ENCODE measurements at regions of chr17 and their contacts with region 1.

Region 1: GRCh38 chr17:1724506-1725362 is at the start of gene WDR81:
- DNase-seq: peak; percentile 82 to 94 (median 89)
- ATAC-seq: peak; percentile 83 to 92 (median 84)
- H3K4me3 ChIP-seq: peak within 1 kb of the TSS; percentile 86 to 95 (median 89)
- H3K27ac ChIP-seq: peak within 1 kb of the TSS; percentile 40 to 75 (median 54)
- H3K4me1 ChIP-seq: peaks cover 0 to 26% (median 0%) of the 10 kb centered on the region in 3 donors
- H3K27me3 ChIP-seq: no peaks in the 10 kb centered on the region
- CTCF ChIP-seq: no peak
- total RNA-seq, gene WDR81: 5.7 to 17.0 (median 8.3) TPM

Region 2: GRCh38 chr17:1546292-1546922 is 178.3 kb before region 1 on chr17:
- intact Hi-C with region 1: no loop called
- DNase-seq: no peak
- ATAC-seq: no peak
- H3K4me3 ChIP-seq: no peak overlapping the region
- H3K27ac ChIP-seq: no peak overlapping the region
- H3K4me1 ChIP-seq: no peaks in the 10 kb centered on the region
- H3K27me3 ChIP-seq: no peaks in the 10 kb centered on the region
- CTCF ChIP-seq: no peak

Region 3: GRCh38 chr17:1673041-1673785 is 51.5 kb before region 1 on chr17:
- intact Hi-C with region 1: no loop called
- DNase-seq: no peak
- ATAC-seq: no peak
- H3K4me3 ChIP-seq: no peak overlapping the region
- H3K27ac ChIP-seq: no peak overlapping the region
- H3K4me1 ChIP-seq: no peaks in the 10 kb centered on the region
- H3K27me3 ChIP-seq: no peaks in the 10 kb centered on the region
- CTCF ChIP-seq: no peak

Region 4: GRCh38 chr17:1779571-1780131 is 54.9 kb after region 1 on chr17:
- intact Hi-C with region 1: loop called in 1 of 3 experiments (anchors 10 kb)
- DNase-seq: peak in 1 of 6 donors; percentile 38
- ATAC-seq: peak in 2 of 4 donors; percentile 28 to 44
- H3K4me3 ChIP-seq: no peak overlapping the region
- H3K27ac ChIP-seq: peak overlapping the region in 1 of 4 donors; percentile 10
- H3K4me1 ChIP-seq: no peaks in the 10 kb centered on the region
- H3K27me3 ChIP-seq: no peaks in the 10 kb centered on the region
- CTCF ChIP-seq: no peak

Region 5: GRCh38 chr17:1865252-1866037 is 140.7 kb after region 1 on chr17:
- intact Hi-C with region 1: loop called in 2 of 3 experiments (anchors 10 kb)
- DNase-seq: peak in 3 of 6 donors; percentile 11 to 41 (median 20)
- ATAC-seq: peak in 3 of 4 donors; percentile 81 to 82 (median 81)
- H3K4me3 ChIP-seq: no peak overlapping the region
- H3K27ac ChIP-seq: no peak overlapping the region
- H3K4me1 ChIP-seq: no peaks in the 10 kb centered on the region
- H3K27me3 ChIP-seq: no peaks in the 10 kb centered on the region
- CTCF ChIP-seq: peak; percentile 20 to 62 (median 41)

Region 6: DNA sequence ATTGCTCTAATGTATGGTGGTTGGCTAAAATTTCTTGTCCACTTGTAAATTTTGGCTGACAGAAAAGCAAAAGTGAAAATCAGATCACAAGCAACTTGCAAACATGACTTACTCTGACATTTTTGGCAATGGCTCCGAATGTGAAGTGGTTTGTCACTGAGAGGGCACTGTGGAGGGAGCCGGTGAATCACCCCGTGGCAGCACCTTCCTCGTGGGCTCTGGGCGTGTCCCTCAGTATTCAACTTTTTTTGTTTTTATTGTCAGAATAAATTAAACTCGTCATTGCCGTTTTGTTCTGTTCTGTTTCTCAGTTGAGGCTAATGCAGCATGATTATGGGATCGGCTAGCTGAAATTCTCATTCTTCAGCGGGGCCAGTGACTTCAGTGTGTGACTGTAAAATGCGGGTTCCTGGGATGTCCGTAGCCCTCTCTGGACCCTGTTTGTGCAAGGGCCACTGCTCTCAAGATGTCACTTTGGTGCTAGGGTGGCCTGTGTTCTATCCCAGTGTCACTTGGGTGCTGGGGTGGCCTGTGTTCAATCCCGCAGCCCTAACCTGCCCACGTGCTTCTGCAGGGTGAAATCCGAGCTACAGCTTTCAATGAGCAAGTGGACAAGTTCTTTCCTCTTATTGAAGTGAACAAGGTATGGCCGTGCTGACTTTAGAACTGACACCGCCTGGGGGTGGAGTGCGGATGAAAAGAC is 153.8 kb after region 1 on chr17:
- intact Hi-C with region 1: loop called in 1 of 3 experiments (anchors 10 kb)
- DNase-seq: no peak
- ATAC-seq: no peak
- H3K4me3 ChIP-seq: no peak overlapping the region
- H3K27ac ChIP-seq: no peak overlapping the region
- H3K4me1 ChIP-seq: no peaks in the 10 kb centered on the region
- H3K27me3 ChIP-seq: no peaks in the 10 kb centered on the region
- CTCF ChIP-seq: no peak

Measured in pancreas (tissue), 10 donors.